Activated CD8-positive, alpha-beta memory T cell treated with anti-CD3 and anti-CD28 coated beads, Interleukin-2, amount 10 ng/mL, durations not matched to agents 7 days and 5 days (primary cell): ENCODE measurements at regions of chr15 and their contacts with region 1.

Region 1: DNA sequence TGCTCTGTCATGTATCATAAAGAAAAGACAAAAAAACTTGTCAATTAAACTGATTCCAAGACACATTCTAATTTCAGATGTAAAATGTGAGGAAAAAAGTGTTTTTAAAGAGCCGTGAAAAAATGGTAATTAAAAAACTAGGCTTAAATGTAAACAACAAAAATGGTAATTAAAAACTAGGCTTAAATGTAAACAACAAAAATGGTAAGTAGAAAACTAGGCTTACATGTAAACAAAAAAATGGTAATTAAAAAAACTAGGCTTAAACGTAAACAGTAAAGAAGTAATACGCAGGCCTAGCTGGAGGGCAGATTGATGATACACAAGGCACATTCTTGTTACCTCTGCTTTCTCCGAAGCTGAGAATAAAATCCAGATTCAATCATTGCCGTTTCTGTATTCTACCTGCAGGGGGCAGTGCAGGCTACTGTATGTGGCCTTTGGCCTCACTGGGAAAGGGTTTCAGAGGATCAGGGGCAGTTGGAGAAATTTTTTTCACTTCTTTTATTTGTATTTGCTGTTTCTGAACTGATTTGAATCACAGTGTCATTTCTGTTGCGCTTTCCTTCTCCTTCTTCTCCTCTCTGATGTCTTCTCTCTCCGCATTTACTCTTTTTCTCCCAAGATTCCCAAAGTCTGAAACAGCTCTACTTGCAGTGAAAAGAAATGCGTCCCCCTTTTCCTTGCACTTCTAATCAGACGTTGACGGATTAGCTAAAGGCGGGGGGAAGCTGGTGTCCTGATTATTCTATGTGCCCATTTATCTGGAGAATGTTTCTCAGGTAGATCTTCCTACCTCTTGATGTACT is 67.2 kb upstream of the MCTP2 start:
- DNase-seq: peak; percentile 76
- ATAC-seq: peak; percentile 83
- H3K4me3 Mint-ChIP-seq: no peak overlapping the region
- H3K27ac Mint-ChIP-seq: no peak overlapping the region
- H3K4me1 Mint-ChIP-seq: peaks cover 13% of the 10 kb centered on the region
- H3K27me3 Mint-ChIP-seq: peaks cover 21% of the 10 kb centered on the region

Region 2: DNA sequence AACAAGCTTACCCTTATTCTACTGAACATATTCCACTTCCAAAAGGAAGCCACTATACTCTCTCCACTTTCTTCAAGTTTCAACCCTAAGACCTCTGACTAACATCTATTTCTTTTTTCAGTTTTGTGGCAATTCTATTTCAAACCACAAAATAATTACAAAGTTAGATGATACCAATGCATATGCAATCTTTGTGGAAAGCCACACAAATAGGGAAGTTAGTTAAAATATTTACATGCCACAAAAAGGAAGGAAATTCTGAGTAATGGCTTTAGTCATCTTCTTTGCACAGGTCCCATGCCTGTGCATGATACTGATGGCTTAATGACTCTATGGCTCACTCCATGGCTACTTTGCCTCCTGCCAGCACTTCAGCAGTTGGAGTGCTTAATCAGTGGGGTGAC is 10.2 kb after region 1 on chr15:
- CTCF ChIA-PET with region 1: interaction called, 17 read pairs
- DNase-seq: peak; percentile 57
- ATAC-seq: peak; percentile 90
- H3K4me3 Mint-ChIP-seq: no peak overlapping the region
- H3K27ac Mint-ChIP-seq: peak overlapping the region; percentile 49
- H3K4me1 Mint-ChIP-seq: peaks cover 42% of the 10 kb centered on the region
- H3K27me3 Mint-ChIP-seq: peaks cover 4% of the 10 kb centered on the region

Region 3: DNA sequence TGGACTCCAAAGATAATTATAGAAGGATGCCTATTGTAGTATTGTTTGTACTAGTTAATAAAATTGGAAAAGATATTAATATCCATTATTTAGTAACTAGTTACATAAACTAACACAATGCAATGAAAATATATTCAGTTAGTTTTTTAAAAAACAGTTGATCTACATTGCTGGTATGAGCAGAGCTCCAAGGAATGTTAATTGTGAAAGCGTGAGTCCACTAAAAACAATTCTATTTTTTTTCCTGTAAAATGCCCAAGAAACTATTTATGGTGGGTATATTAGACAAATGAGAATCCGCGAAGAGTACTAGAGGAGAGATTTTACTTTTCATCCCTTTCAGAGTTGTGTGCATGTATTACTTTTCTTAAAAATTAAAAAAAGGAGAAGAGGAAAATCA is 171.4 kb after region 1 on chr15:
- CTCF ChIA-PET with region 1: interaction called, 17 read pairs
- DNase-seq: no peak
- ATAC-seq: no peak
- H3K4me3 Mint-ChIP-seq: no peak overlapping the region
- H3K27ac Mint-ChIP-seq: no peak overlapping the region
- H3K4me1 Mint-ChIP-seq: no peaks in the 10 kb centered on the region
- H3K27me3 Mint-ChIP-seq: no peaks in the 10 kb centered on the region

Region 4: GRCh38 chr15:94412979-94413746 is 249.0 kb after region 1 on chr15:
- CTCF ChIA-PET with region 1: interaction called, 11 read pairs
- DNase-seq: no peak
- ATAC-seq: no peak
- H3K4me3 Mint-ChIP-seq: no peak overlapping the region
- H3K27ac Mint-ChIP-seq: no peak overlapping the region
- H3K4me1 Mint-ChIP-seq: peaks cover 2% of the 10 kb centered on the region
- H3K27me3 Mint-ChIP-seq: no peaks in the 10 kb centered on the region